Dendritic cell treated with granulocyte-macrophage colony-stimulating factor and Interleukin-4, amounts not matched to agents 40 ng/mL and 50 ng/mL, for 4 days (primary cell): ENCODE measurements at regions of chr5 and their contacts with region 1.

Region 1: DNA sequence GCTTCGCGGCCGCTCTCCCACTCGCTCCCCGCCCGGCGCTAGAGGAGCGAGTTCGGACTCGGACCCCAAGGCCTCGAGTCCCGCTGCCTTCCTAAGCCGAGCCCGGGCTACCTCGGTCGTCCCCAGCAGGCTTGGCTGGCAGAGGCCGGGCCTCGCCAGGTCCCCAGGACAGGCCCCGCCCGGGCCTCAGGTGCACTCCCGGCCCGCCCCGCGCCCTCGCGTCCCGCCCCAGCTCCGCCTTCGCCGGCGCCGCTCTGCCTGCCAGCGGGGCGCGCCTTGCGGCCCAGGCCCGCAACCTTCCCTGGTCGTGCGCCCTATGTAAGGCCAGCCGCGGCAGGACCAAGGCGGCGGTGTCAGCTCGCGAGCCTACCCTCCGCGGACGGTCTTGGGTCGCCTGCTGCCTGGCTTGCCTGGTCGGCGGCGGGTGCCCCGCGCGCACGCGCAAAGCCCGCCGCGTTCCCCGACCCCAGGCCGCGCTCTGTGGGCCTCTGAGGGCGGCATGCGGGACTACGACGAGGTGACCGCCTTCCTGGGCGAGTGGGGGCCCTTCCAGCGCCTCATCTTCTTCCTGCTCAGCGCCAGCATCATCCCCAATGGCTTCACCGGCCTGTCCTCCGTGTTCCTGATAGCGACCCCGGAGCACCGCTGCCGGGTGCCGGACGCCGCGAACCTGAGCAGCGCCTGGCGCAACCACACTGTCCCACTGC is at the start of gene SLC22A5:
- H3K4me3 Mint-ChIP-seq: peak within 1 kb of the TSS; percentile 83
- H3K27ac Mint-ChIP-seq: peak within 1 kb of the TSS; percentile 79
- H3K4me1 Mint-ChIP-seq: peaks cover 31% of the 10 kb centered on the region
- H3K27me3 Mint-ChIP-seq: no peaks in the 10 kb centered on the region

Region 2: DNA sequence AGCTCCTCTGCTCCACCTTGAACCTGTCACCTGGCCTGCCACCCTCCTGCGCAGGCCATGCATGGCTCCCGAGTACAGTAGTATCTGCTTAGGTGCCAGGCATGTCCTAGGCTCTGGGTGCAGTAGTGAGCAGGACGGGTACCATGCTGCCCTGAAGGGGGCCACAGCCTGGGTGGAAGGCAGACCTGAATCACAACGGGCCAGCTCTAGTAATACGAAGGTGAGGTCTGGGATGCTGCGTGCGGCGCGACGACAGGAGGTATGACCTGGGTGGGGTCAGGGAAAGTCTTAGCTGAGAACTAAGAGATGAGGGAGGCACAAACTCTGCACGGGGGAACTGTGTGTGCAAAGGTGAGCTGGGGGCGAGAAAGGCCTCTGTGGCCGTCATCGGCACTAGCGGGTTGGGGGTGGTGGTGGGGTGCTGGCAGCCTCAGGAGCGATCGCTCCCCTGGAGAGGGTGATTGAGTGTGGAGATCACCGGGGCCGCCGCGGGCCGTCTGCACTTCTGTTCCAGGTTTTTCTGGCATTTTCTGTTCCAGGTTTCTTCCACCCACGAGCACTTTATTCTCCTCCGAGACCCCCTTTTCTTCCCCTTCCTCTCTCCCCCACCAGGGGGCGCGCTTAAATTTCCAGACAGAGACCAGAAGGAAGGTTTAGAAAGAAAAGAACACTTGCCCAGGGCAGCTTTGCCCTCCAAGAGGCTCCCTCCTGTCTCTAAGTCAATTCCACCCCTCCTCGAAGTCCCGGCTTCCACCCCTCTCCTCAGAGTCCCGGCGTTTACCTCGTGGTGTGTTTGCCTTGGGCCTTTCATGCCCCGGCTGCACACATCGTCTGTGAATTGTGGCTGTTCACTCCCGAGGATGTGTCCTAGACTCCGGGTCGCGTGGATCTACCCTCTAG is 97.1 kb before region 1 on chr5:
- intact Hi-C with region 1: loop called (anchors 5 kb)
- H3K4me3 Mint-ChIP-seq: peak overlapping the region; percentile 57
- H3K27ac Mint-ChIP-seq: no peak overlapping the region
- H3K4me1 Mint-ChIP-seq: peaks cover 18% of the 10 kb centered on the region
- H3K27me3 Mint-ChIP-seq: peaks cover 30% of the 10 kb centered on the region

Region 3: GRCh38 chr5:132293066-132293991 is 76.3 kb before region 1 on chr5:
- intact Hi-C with region 1: loop called (anchors 5 kb)
- H3K4me3 Mint-ChIP-seq: peak overlapping the region; percentile 93
- H3K27ac Mint-ChIP-seq: peak overlapping the region; percentile 99
- H3K4me1 Mint-ChIP-seq: peaks cover 56% of the 10 kb centered on the region
- H3K27me3 Mint-ChIP-seq: no peaks in the 10 kb centered on the region